Prostate gland (tissue), 2 donors: ENCODE measurements at regions of chr5 and their contacts with region 1.

Region 1: DNA sequence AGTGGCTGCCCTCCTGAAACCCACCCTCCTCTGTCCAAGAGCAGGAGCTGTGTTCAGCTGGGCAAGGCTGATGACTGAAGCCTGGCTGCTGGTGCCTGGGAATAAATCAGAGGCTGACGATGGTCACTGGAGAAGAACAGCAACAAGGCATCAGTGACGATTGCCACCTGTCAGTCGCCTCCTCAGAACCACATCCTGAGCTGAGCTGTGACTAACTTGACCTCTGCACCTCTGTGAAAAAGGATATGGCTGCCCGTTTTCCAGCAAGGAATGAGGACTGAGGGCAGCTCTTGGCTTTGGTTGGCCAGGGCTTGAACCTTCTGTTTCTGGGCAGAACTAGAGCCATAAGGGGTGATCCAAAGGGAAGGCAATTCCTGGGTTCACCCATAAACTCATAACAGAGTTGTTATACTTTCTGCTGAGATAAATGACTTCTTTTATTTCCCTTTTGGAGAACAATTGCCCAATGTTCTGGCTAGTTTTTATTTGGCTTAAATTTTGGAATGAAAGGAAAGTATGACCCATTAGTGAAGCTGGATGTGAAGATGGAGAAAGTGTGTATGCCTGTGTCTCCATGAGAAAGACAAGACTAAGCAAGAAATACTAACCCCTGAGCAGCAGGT is 40.1 kb downstream of the TRIP13 start:
- DNase-seq: no peak
- H3K4me3 ChIP-seq: no peak overlapping the region
- H3K27ac ChIP-seq: no peak overlapping the region
- H3K4me1 ChIP-seq: no peaks in the 10 kb centered on the region
- H3K27me3 ChIP-seq: no peaks in the 10 kb centered on the region
- CTCF ChIP-seq: no peak
- POLR2A ChIP-seq: no peak

Region 2: GRCh38 chr5:1124205-1125029 is 191.7 kb after region 1 on chr5:
- intact Hi-C with region 1: loop called (anchors 5 kb)
- DNase-seq: no peak
- H3K4me3 ChIP-seq: no peak overlapping the region
- H3K27ac ChIP-seq: no peak overlapping the region
- H3K4me1 ChIP-seq: no peaks in the 10 kb centered on the region
- H3K27me3 ChIP-seq: no peaks in the 10 kb centered on the region
- CTCF ChIP-seq: no peak
- POLR2A ChIP-seq: no peak

Region 3: GRCh38 chr5:2375757-2376250 is 1443.1 kb after region 1 on chr5:
- intact Hi-C with region 1: no loop called
- DNase-seq: no peak
- H3K4me3 ChIP-seq: no peak overlapping the region
- H3K27ac ChIP-seq: no peak overlapping the region
- H3K4me1 ChIP-seq: no peaks in the 10 kb centered on the region
- H3K27me3 ChIP-seq: no peaks in the 10 kb centered on the region
- CTCF ChIP-seq: no peak
- POLR2A ChIP-seq: no peak